Panc1 (cell line): ENCODE measurements at regions of chr2 and their contacts with region 1.

Region 1: GRCh38 chr2:29042561-29043075 is 31.7 kb downstream of the PCARE start:
- DNase-seq: no peak
- ATAC-seq: peak; percentile 71
- H3K4me3 ChIP-seq: no peak overlapping the region
- H3K27ac ChIP-seq: no peak overlapping the region
- H3K4me1 ChIP-seq: no peaks in the 10 kb centered on the region
- H3K27me3 ChIP-seq: no peaks in the 10 kb centered on the region
- CTCF ChIP-seq: no peak

Region 2: DNA sequence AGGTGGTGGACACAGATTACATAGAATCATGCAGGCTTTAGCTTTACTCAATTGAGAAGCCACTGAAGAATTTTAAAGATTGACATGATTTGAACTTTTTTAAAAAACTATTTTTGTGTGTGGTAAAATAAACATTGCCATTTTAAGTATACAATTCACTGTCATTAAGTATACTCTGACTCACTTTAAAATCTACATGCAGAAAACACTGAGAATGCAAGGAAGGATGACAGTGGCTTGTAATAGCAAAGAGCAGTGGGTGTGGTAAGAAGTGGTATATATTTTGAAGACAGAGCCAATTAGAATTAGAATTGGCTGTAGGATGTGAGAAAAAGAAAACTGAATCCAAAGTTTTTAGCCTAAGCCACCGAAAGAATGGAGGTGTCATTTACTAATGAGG is 187.4 kb before region 1 on chr2:
- CTCF ChIA-PET with region 1: no interaction called
- POLR2A ChIA-PET with region 1: no interaction called
- in situ Hi-C with region 1: no loop called
- intact Hi-C with region 1: no loop called
- DNase-seq: no peak
- ATAC-seq: no peak
- H3K4me3 ChIP-seq: no peak overlapping the region
- H3K27ac ChIP-seq: no peak overlapping the region
- H3K4me1 ChIP-seq: no peaks in the 10 kb centered on the region
- H3K27me3 ChIP-seq: no peaks in the 10 kb centered on the region
- CTCF ChIP-seq: no peak

Region 3: GRCh38 chr2:29053670-29054400 is 11.2 kb after region 1 on chr2:
- CTCF ChIA-PET with region 1: no interaction called
- POLR2A ChIA-PET with region 1: no interaction called
- in situ Hi-C with region 1: no loop called
- intact Hi-C with region 1: no loop called
- DNase-seq: no peak
- ATAC-seq: peak; percentile 51
- H3K4me3 ChIP-seq: no peak overlapping the region
- H3K27ac ChIP-seq: 0 out of 2 replicates have a peak overlapping the region, but pooled peaks have one; percentile 23
- H3K4me1 ChIP-seq: no peaks in the 10 kb centered on the region
- H3K27me3 ChIP-seq: no peaks in the 10 kb centered on the region
- CTCF ChIP-seq: no peak

Region 4: DNA sequence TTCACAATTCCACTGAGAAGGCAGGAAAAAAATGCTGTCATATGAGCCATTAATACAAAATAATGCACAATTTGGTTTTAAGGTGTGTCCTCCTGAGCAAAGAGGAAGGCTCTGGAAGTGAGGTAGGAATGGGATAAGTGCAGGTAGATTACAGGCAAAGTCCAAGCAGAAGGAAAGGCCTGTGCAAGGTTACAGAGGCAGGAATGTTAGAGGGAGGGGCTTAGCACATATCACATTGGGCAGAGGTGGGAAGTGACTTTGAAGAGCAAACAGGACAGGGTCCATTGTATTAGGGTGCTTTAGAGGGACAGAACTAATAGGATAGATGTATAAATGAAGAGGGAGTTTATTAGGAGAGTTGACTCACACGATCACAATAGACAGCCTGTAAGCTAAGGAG is 57.9 kb after region 1 on chr2:
- CTCF ChIA-PET with region 1: no interaction called
- POLR2A ChIA-PET with region 1: interaction called, 10 read pairs
- in situ Hi-C with region 1: no loop called
- intact Hi-C with region 1: no loop called
- DNase-seq: no peak
- ATAC-seq: no peak
- H3K4me3 ChIP-seq: no peak overlapping the region
- H3K27ac ChIP-seq: no peak overlapping the region
- H3K4me1 ChIP-seq: peaks cover 3% of the 10 kb centered on the region; the same call in 1 of the 2 replicates
- H3K27me3 ChIP-seq: no peaks in the 10 kb centered on the region
- CTCF ChIP-seq: no peak